HEK293T (cell line): ENCODE measurements at regions of chr1 and their contacts with region 1.

Region 1: GRCh38 chr1:43974443-43975248 is at the start of gene ATP6V0B:
- DNase-seq: peak; percentile 94

Region 2: DNA sequence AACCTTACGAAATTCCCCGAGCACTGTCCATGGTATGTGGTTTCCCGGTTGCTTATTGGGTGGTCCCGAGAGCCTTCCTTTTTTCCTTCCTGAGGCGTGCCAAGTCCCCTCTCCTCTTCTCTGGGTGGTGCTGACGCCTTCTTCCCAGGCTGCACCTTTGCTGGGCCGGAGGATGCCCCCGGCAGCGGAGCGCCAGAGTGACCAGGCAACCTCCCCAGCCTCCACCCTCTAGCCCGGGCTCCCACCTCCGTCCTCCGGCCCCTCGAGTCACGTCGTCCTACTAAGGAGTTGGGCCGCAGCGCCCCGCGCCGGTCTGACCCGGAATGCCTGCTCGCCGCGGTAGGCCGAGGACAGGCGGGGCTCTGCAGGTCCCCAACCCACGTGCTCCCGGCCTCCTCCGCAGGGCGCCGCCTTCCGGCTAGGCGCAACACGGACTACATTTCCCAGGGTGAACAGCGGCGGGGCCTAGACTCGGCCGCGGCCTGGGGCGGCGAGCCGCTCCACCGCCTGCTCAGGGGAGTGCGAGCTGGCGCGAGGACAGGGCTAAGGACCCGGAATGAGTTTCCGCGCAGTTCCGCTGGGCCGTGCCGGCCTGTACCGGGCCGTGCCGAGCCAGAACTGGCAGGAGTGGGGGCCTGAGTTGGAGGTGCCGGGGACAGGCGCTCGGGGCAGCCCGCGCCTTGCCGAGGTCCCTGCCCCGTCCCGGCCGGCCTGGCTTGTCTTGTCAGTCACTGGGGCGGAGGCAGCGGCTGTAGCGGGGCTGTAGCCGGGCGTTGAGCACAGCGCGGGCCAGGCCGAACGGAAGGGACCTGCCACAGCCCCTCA is 28.2 kb before region 1 on chr1 and contains the start of gene IPO13:
- CTCF ChIA-PET with region 1: interaction called, 5 read pairs
- POLR2A ChIA-PET with region 1: interaction called, 25 read pairs
- DNase-seq: peak; percentile 97

Region 3: DNA sequence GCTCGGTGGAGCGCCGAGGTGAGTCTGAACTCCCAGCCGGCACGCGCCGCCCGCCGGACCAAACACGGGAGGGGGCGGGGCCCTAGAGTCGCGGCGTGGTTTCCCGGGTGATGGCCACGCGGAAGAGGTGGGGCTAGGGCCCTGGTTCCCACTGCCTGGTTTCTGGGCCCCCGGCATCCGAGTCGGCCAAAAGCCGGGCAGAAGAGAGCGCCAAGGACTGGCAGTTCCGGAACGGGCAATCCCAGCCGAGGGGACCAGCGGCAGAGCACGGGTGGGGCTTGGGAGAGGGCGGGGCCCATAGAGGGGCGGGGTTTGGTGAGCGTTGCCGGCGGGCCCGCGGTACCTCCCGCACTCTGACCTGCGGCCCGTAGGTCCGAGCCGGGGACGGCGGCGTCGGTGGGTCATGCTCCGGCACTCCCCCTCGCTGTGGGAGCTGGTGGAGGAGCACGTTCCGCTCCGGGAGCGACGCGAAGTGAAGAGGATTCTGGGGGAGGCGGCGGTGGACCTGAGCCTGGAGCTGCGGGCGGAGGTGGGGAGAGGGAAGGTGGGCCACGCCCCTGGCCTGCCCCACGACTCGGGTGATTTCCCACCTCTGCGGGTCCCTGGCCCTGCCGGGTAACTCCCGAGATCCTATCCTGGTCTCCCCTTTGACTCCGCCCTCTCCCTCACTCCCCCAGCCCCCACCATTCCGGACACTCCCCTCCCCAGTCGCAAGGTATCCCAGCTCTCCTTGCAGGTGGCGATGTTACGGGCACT is 17.0 kb after region 1 on chr1 and contains the start of gene CCDC24:
- CTCF ChIA-PET with region 1: interaction called, 10 read pairs
- POLR2A ChIA-PET with region 1: interaction called, 6 read pairs
- DNase-seq: peak; percentile 70